ENCODE measurements at regions of chr11 and their contacts with region 1.

Region 1: GRCh38 chr11:131910523-131911387 is 540.3 kb downstream of the NTM start:
- DNase-seq: peak; percentile 60
- H3K4me3 ChIP-seq: peak overlapping the region; percentile 70 to 83 (median 81)
- H3K27ac ChIP-seq: peak overlapping the region; percentile 69
- H3K4me1 ChIP-seq: peaks cover 36% of the 10 kb centered on the region
- H3K27me3 ChIP-seq: no peaks in the 10 kb centered on the region
- CTCF ChIP-seq: no peak

Region 2: GRCh38 chr11:131005829-131006228 is 904.9 kb before region 1 on chr11:
- CTCF ChIA-PET with region 1: no interaction called
- dilution Hi-C with region 1: no loop called
- in situ Hi-C with region 1: no loop called
- intact Hi-C with region 1: loop called (anchors 5 kb)
- DNase-seq: no peak
- H3K4me3 ChIP-seq: no peak overlapping the region
- H3K27ac ChIP-seq: no peak overlapping the region
- H3K4me1 ChIP-seq: peaks cover 24% of the 10 kb centered on the region
- H3K27me3 ChIP-seq: no peaks in the 10 kb centered on the region
- CTCF ChIP-seq: no peak

Region 3: DNA sequence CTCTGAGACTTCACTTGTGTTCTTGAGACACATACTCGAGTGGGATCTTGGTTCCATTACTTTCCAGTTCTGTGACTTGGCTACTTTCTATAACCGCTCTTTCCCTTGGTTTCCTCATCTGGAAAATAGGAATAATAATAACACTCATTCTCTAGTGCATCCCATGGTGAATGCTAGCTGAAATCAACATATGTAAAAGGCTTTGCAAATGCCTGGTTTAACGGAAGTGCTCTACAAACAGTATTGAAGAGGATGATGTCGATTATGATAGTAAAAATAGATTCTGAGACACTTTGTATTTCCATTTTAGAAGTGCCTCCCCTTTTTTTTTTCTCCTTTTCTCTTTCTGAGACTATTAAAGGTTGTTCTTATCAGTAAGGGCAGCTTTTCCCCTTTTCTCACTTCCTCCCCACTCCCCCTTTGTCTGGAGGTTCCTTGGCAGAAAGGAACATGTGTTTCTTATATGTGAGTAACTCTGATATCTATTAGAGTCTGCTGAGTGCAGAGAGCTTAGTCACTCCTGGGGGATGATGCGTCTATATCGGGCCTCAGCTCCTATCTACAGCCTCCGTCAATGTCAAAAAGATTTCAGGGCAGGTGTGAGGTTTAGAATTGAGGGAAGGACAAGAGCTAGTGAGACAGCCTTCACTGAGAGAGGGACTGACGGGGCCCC is 51.1 kb before region 1 on chr11:
- CTCF ChIA-PET with region 1: no interaction called
- dilution Hi-C with region 1: loop called (anchors 5 kb)
- in situ Hi-C with region 1: loop called in 1 of 2 experiments (anchors 10 kb)
- intact Hi-C with region 1: no loop called
- DNase-seq: no peak
- H3K4me3 ChIP-seq: no peak overlapping the region
- H3K27ac ChIP-seq: no peak overlapping the region
- H3K4me1 ChIP-seq: no peaks in the 10 kb centered on the region
- H3K27me3 ChIP-seq: no peaks in the 10 kb centered on the region
- CTCF ChIP-seq: no peak

Region 4: DNA sequence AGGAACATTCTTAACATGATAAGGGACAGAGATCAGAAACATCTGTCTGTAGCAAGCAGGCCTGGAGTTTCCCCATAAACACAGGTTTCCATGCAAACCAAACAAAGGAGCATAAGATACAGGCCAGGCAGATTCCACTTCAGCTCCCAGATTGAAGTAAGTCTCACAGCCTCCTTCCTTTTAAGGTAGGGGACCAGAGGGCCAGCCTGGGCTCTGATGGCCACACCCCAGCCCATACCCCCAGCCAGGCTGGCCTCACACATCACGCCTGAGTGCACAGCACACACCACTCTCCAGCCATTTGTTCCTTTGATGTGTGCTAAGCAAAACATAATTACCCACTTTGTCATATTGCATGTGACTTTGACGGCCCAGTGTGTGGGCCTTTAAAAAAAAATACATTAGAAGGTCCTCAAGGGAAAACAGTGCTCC is 21.6 kb before region 1 on chr11:
- CTCF ChIA-PET with region 1: interaction called, 3 read pairs
- dilution Hi-C with region 1: no loop called
- in situ Hi-C with region 1: no loop called
- intact Hi-C with region 1: loop called (anchors 2 kb)
- DNase-seq: peak; percentile 64
- H3K4me3 ChIP-seq: no peak overlapping the region
- H3K27ac ChIP-seq: peak overlapping the region; percentile 89
- H3K4me1 ChIP-seq: peaks cover 48% of the 10 kb centered on the region
- H3K27me3 ChIP-seq: no peaks in the 10 kb centered on the region
- CTCF ChIP-seq: no peak

Region 5: DNA sequence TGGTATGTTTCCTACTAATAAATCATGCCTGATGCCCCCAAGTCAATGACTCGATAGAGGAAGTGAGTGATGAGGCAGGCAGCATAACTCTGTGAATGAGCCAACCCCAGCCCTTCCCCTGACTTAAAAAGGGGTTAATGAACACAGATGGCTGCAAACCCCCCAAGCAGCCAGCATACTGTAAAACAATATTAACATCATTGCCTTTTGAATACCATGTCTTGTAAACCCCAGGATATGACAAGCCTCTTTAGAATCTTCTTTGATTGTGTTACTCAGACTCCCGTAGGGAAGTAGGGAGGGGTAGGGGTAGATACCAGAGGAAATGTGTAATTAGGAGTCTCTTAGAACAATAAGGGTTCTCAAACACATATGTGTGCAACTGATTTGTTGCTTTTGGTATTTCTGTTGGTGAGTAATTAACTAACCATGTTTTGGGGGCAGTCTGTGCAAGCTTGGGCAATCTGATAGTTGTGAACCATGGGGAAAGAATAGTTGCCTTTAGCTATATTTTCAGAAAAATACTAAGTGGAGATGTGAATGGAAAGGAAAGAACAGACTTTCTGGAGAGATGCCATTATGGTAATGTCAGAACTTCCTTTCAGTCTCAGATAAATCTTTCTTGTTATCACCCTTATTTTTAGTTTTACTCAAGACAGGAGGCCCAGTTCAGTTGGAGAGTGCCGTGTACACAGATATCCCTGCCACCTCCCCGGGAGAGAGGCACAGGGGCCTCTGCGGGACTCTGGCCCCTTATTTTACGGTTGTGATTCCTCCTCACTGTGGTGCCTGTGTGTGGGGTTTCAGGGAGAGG is 161.5 kb after region 1 on chr11:
- CTCF ChIA-PET with region 1: no interaction called
- dilution Hi-C with region 1: no loop called
- in situ Hi-C with region 1: no loop called
- intact Hi-C with region 1: loop called (anchors 5 kb)
- DNase-seq: peak; percentile 97
- H3K4me3 ChIP-seq: no peak overlapping the region
- H3K27ac ChIP-seq: peak overlapping the region; percentile 99
- H3K4me1 ChIP-seq: peaks cover 56% of the 10 kb centered on the region
- H3K27me3 ChIP-seq: no peaks in the 10 kb centered on the region
- CTCF ChIP-seq: no peak

Measured in mammary epithelial cell (primary cell).